ENCODE measurements at regions of chr11 and their contacts with region 1.

Region 1: DNA sequence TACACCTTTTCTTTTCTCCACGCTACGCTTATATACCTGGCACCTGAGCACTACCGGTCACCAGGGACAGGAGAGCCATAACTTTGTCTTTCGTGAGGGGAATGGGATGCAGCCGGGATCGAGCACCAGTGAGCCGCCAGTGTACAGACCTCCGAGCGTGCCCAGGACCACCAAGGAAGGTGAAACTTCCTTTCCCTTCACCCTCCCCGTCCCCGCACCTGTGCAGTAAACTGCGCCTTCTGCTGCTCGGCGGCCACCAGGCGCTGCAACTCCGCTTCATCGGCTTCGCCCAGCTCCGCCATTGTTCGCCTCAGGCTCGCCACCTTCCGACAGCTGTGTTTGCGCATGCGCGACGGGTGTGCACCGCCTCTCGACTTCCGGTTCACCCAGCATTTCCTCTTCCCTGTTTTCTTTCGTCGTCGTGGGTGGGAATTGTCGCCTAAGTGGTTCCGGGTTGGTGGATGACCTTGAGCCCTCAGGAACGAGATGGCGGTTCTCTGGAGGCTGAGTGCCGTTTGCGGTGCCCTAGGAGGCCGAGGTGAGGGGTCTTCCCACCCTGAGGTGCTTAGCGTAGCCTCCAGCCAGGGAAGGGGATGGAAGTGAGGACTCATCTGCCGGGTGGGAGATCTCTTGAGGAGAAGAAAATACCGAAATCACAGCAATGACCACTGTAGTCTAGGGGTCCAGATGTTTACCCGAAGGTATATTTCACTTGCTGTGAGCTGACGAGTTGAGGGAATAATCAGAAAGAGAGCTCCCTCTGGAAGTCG is at the starts of genes SDHD and TIMM8B:
- DNase-seq: peak; percentile 97 to 98 (median 98)
- H3K4me3 ChIP-seq: peak within 1 kb of the TSS; percentile 89 to 100 (median 95)
- H3K4me3 Mint-ChIP-seq: peak within 1 kb of the TSS; percentile 96 to 99
- H3K27ac ChIP-seq: peak within 1 kb of the TSS; percentile 63 to 99
- H3K27ac Mint-ChIP-seq: peak within 1 kb of the TSS; percentile 95 to 99 (median 98)
- H3K4me1 ChIP-seq: peaks cover 24 to 30% of the 10 kb centered on the region in 2 donors
- H3K4me1 Mint-ChIP-seq: peaks cover 41% of the 10 kb centered on the region
- H3K27me3 ChIP-seq: no peaks in the 10 kb centered on the region
- H3K27me3 Mint-ChIP-seq: peaks cover 0 to 2% (median 0%) of the 10 kb centered on the region in 3 donors
- CTCF ChIP-seq: peak; percentile 34
- polyA plus RNA-seq, gene SDHD: 60.4 to 270 (median 270) TPM
- polyA plus RNA-seq, gene TIMM8B: 27.9 to 160 (median 143) TPM

Region 2: DNA sequence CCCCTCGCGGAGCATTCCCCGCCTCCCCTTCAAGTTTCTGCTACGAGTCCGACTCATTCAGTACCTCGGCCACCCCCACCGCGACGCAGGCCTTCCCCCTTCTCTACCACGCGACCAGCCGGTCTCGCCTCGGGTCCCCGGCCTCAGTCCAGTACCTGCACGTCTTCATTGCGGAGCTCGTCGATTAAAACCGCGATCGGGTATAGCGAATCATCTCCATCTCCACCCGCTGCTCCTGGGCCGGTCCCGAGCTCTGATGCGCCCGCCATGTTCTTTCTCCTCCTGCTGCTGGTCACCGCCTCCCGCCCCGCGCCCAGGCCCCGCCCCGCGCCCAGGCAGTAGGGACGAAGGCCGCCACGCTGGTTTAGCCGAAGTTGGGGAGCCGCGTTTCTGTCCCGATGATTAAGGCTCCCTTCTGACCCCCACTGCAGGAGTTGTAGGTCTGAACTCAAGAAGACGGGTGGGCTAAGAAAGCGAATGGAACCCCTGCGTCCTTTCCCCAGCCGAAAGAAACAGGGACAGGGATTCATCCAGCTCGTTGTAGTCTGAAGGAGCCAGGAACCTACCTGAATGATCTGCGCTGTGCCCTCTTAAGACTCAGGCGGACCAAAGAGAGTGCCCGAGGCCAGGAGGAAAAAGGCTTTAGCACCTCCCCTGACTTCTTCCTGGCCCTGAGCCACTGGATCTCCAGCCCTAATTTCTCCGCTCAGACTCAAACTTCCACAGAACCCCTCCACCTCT is 320.3 kb before region 1 on chr11 and contains the start of gene PPP2R1B:
- intact Hi-C with region 1: no loop called
- DNase-seq: peak; percentile 33 to 62 (median 53)
- H3K4me3 ChIP-seq: peak within 1 kb of the TSS; percentile 83 to 93 (median 85)
- H3K4me3 Mint-ChIP-seq: peak within 1 kb of the TSS; percentile 100
- H3K27ac ChIP-seq: peak within 1 kb of the TSS; percentile 11 to 65
- H3K27ac Mint-ChIP-seq: peak within 1 kb of the TSS; percentile 80 to 99 (median 94)
- H3K4me1 ChIP-seq: peaks cover 14 to 23% of the 10 kb centered on the region in 2 donors
- H3K4me1 Mint-ChIP-seq: peaks cover 21% of the 10 kb centered on the region
- H3K27me3 ChIP-seq: no peaks in the 10 kb centered on the region
- H3K27me3 Mint-ChIP-seq: peaks cover 0 to 7% (median 6%) of the 10 kb centered on the region in 3 donors
- CTCF ChIP-seq: no peak
- polyA plus RNA-seq, gene PPP2R1B: 5.4 to 16.9 (median 11.2) TPM

Region 3: DNA sequence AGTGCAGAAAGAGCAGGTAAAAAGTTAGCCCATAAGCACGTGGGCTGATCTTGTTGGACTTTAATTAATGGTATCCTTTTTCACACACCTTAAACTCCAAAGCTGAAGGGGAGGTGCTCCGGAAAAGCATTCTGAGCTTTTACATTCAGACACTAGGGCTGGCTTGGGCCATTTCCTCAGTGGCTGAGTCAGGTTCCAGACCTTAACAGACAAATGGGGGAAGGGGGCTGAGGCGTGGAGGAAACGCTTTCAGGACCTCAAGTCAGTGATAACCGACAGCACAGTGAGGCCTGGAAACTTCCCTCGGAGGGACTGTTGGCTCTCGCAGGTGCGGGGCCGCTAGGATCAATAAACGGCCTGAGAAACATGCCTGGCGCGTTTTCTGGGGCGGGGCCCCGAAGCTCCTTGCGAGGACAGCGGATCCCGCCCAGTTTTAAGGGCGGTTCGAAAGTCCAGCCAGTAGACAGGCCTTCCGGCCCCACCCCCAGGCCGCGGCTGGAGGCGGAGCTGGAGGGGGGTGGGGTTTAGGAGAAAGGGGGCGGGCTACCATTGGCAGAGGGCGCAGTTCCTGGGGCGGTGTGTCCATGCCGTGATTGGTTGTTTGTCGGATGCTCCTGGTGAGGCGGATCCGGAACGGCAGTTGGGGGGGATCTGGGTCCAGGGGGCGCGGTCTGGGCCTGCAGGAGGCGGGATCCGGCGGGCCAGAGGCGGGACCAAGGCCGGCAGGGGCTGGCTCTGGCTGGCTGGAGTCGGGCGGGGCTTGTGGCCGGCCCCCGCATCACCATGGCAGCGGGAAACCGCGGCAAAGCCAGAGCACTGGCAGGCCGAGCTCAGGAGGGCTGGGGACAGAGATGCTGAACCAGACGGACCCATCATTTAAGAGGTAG is 159.9 kb before region 1 on chr11:
- intact Hi-C with region 1: loop called (anchors 2 to 10 kb)
- DNase-seq: peak; percentile 91 to 95 (median 94)
- H3K4me3 ChIP-seq: peak overlapping the region; percentile 61 to 77 (median 73)
- H3K4me3 Mint-ChIP-seq: peak overlapping the region; percentile 85 to 92
- H3K27ac ChIP-seq: peak overlapping the region; percentile 70 to 81
- H3K27ac Mint-ChIP-seq: peak overlapping the region; percentile 87 to 95 (median 93)
- H3K4me1 ChIP-seq: peaks cover 24 to 34% of the 10 kb centered on the region in 2 donors
- H3K4me1 Mint-ChIP-seq: peaks cover 28% of the 10 kb centered on the region
- H3K27me3 ChIP-seq: no peaks in the 10 kb centered on the region
- H3K27me3 Mint-ChIP-seq: peaks cover 0 to 2% (median 1%) of the 10 kb centered on the region in 3 donors
- CTCF ChIP-seq: no peak

Region 4: GRCh38 chr11:112074026-112074811 is 12.4 kb before region 1 on chr11 and contains the start of gene NKAPD1:
- intact Hi-C with region 1: loop called in 1 of 2 experiments (anchors 2 kb)
- DNase-seq: peak; percentile 84 to 87 (median 85)
- H3K4me3 ChIP-seq: peak within 1 kb of the TSS; percentile 59 to 96 (median 73)
- H3K4me3 Mint-ChIP-seq: peak within 1 kb of the TSS; percentile 92 to 98
- H3K27ac ChIP-seq: peak within 1 kb of the TSS; percentile 78 to 91
- H3K27ac Mint-ChIP-seq: peak within 1 kb of the TSS; percentile 94 to 100 (median 99)
- H3K4me1 ChIP-seq: peaks cover 12 to 20% of the 10 kb centered on the region in 2 donors
- H3K4me1 Mint-ChIP-seq: peaks cover 21% of the 10 kb centered on the region
- H3K27me3 ChIP-seq: no peaks in the 10 kb centered on the region
- H3K27me3 Mint-ChIP-seq: no peaks in the 10 kb centered on the region
- CTCF ChIP-seq: no peak
- polyA plus RNA-seq, gene NKAPD1: 5.3 to 9.4 (median 7.7) TPM

Region 5: DNA sequence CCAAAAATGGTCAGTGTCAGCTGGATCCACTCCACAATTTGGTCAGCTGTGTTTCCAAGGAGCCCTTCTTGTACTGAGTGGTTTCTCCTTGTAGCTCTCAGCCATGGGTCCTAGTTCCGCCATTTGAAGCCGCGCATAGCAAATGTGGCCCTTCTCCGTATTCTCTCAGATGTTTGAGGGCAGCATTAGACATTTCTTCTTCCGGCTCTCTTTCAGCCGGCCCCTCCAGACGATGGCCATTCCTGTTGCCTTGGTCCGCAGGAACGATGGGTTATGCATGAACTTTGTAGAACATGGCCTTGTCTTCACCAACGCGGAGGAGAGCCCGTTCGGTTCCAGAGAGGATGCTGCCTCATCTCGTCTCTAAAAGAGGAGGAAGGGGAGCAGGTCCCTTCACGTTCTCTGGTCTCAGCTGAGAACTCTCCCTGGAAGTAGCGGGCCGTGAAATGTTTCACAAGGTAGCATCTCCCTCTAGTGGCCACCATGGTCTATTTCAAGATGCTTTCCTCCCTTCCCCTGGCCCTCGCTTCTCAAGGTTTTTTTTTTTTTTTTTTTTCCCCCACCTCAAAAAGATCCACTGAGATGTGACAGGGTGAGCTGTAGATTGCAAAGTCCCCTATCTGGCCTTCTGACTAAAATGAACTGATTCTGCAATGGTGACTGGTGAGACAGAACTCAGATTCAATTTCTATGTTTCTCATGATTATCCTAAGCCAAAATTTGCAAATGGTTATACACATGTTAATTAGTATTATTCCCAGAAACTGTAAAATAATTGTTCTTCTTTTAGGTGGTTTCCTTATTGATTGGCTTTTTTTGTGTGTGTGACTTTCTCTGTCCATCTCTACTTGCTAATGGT is 193.9 kb after region 1 on chr11:
- intact Hi-C with region 1: loop called in 1 of 2 experiments (anchors 10 kb)
- DNase-seq: peak; percentile 69 to 82 (median 76)
- H3K4me3 ChIP-seq: peak overlapping the region; percentile 44 to 85 (median 49)
- H3K4me3 Mint-ChIP-seq: peak overlapping the region; percentile 87 to 95
- H3K27ac ChIP-seq: peak overlapping the region in 1 of 2 donors; percentile 33
- H3K27ac Mint-ChIP-seq: peak overlapping the region in 4 of 7 donors; percentile 57 to 79 (median 70)
- H3K4me1 ChIP-seq: peaks cover 13 to 21% of the 10 kb centered on the region in 2 donors
- H3K4me1 Mint-ChIP-seq: peaks cover 33% of the 10 kb centered on the region
- H3K27me3 ChIP-seq: no peaks in the 10 kb centered on the region
- H3K27me3 Mint-ChIP-seq: peaks cover 0 to 4% (median 2%) of the 10 kb centered on the region in 3 donors
- CTCF ChIP-seq: peak; percentile 65

Measured in CD14-positive monocyte (primary cell).